ENCODE measurements at regions of chr6 and their contacts with region 1.

Region 1: GRCh38 chr6:30013291-30013922 is 47.7 kb upstream of the POLR1H start:
- DNase-seq: peak; percentile 64
- H3K4me3 ChIP-seq: no peak overlapping the region
- H3K27ac ChIP-seq: no peak overlapping the region
- H3K4me1 ChIP-seq: no peaks in the 10 kb centered on the region
- H3K27me3 ChIP-seq: no peaks in the 10 kb centered on the region
- CTCF ChIP-seq: peak; percentile 66
- EP300 ChIP-seq: no peak
- RAD21 ChIP-seq: peak; percentile 83

Region 2: DNA sequence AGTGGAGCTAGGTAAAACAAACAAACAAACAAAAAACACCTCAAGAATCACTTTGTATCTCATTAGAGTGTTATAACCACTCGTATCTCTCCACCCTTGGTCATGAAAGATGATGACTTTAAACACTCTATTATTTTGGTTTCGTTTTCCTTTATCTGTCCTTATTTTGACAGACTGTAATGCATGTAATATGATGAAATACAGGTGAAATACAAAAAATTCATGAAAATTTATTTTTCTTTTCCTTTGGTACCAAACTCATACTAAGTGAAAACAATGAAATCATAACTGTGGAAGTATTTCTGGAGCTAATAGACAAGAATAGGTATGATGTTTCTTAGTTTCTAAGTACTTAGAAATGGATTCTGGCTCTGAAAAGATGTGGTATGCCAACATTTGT is 613.9 kb before region 1 on chr6:
- CTCF ChIA-PET with region 1: no interaction called
- POLR2A ChIA-PET with region 1: no interaction called
- DNase-seq: no peak
- H3K4me3 ChIP-seq: no peak overlapping the region
- H3K27ac ChIP-seq: no peak overlapping the region
- H3K4me1 ChIP-seq: no peaks in the 10 kb centered on the region
- H3K27me3 ChIP-seq: no peaks in the 10 kb centered on the region
- CTCF ChIP-seq: no peak
- EP300 ChIP-seq: no peak
- RAD21 ChIP-seq: no peak

Region 3: DNA sequence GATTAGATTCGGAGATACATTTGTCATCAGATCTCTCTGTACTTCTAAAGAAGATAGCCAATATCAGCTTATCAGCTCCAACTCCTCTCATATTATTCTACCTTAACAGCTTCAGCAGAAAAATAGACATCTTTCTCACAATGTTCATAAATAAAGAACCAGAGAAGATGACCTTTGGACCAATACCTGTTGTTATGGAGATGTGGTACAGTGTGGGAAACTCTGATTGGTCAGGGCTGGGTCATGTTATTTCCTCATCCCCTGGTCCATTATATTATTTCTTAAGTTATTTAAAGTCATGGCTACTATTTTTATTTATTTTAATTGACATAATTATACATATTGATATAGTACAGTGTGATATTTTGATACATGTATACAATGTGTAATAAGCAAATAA is 11.8 kb after region 1 on chr6:
- CTCF ChIA-PET with region 1: interaction called, 16 read pairs
- POLR2A ChIA-PET with region 1: no interaction called
- DNase-seq: no peak
- H3K4me3 ChIP-seq: no peak overlapping the region
- H3K27ac ChIP-seq: no peak overlapping the region
- H3K4me1 ChIP-seq: no peaks in the 10 kb centered on the region
- H3K27me3 ChIP-seq: no peaks in the 10 kb centered on the region
- CTCF ChIP-seq: no peak
- EP300 ChIP-seq: no peak
- RAD21 ChIP-seq: no peak

Region 4: GRCh38 chr6:30041221-30041620 is 27.8 kb after region 1 on chr6:
- CTCF ChIA-PET with region 1: no interaction called
- POLR2A ChIA-PET with region 1: no interaction called
- DNase-seq: no peak
- H3K4me3 ChIP-seq: no peak overlapping the region
- H3K27ac ChIP-seq: no peak overlapping the region
- H3K4me1 ChIP-seq: peaks cover 0 to 6% of the 10 kb centered on the region in 2 experiments; a peak in 1 of 4 replicates
- H3K27me3 ChIP-seq: no peaks in the 10 kb centered on the region
- CTCF ChIP-seq: no peak
- EP300 ChIP-seq: no peak
- RAD21 ChIP-seq: no peak

Region 5: GRCh38 chr6:30091577-30092381 is 78.4 kb after region 1 on chr6:
- CTCF ChIA-PET with region 1: no interaction called
- POLR2A ChIA-PET with region 1: no interaction called
- DNase-seq: no peak
- H3K4me3 ChIP-seq: no peak overlapping the region
- H3K27ac ChIP-seq: no peak overlapping the region
- H3K4me1 ChIP-seq: no peaks in the 10 kb centered on the region
- H3K27me3 ChIP-seq: peaks cover 56% of the 10 kb centered on the region
- CTCF ChIP-seq: no peak
- EP300 ChIP-seq: no peak
- RAD21 ChIP-seq: no peak

Region 6: DNA sequence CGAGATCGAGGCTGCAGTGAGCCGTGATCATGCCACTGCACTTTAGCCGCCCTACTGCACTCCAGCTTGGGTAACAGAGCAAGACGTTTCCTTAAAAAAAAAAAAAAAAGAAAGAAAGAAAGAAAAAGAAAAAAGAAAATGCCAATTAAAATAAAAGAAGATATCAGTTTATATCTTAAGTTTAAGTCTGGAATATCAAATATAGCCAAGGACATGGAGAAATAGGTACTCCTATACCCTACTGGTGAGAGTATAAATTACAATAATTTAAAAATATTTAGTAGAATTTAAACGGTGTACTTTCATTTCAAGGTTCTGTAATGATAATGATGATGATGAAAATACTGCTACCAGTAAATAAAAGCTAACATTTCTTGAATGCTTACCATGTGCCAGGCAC is 103.3 kb after region 1 on chr6:
- CTCF ChIA-PET with region 1: no interaction called
- POLR2A ChIA-PET with region 1: no interaction called
- DNase-seq: no peak
- H3K4me3 ChIP-seq: no peak overlapping the region
- H3K27ac ChIP-seq: no peak overlapping the region
- H3K4me1 ChIP-seq: no peaks in the 10 kb centered on the region
- H3K27me3 ChIP-seq: peaks cover 27% of the 10 kb centered on the region
- CTCF ChIP-seq: peak; percentile 35; the same call in 1 of the 2 replicates
- EP300 ChIP-seq: no peak
- RAD21 ChIP-seq: no peak

Measured in SK-N-SH (cell line).